B cell (primary cell): ENCODE measurements at regions of chr17 and their contacts with region 1.

Region 1: GRCh38 chr17:30278032-30278431 is 13.7 kb downstream of the BLMH start:
- DNase-seq: peak; percentile 25
- ATAC-seq: no peak
- H3K4me3 ChIP-seq: no peak overlapping the region
- H3K4me3 Mint-ChIP-seq: no peak overlapping the region
- H3K27ac ChIP-seq: no peak overlapping the region
- H3K27ac Mint-ChIP-seq: no peak overlapping the region
- H3K4me1 ChIP-seq: no peaks in the 10 kb centered on the region
- H3K4me1 Mint-ChIP-seq: no peaks in the 10 kb centered on the region
- H3K27me3 ChIP-seq: no peaks in the 10 kb centered on the region
- H3K27me3 Mint-ChIP-seq: no peaks in the 10 kb centered on the region
- CTCF ChIP-seq: peak; percentile 35

Region 2: GRCh38 chr17:29633886-29634285 is 644.1 kb before region 1 on chr17:
- CTCF ChIA-PET with region 1: no interaction called
- POLR2A ChIA-PET with region 1: no interaction called
- intact Hi-C with region 1: no loop called
- DNase-seq: no peak
- ATAC-seq: no peak
- H3K4me3 ChIP-seq: no peak overlapping the region
- H3K4me3 Mint-ChIP-seq: no peak overlapping the region
- H3K27ac ChIP-seq: no peak overlapping the region
- H3K27ac Mint-ChIP-seq: no peak overlapping the region
- H3K4me1 ChIP-seq: peaks cover under 1 to 6% of the 10 kb centered on the region in 2 donors
- H3K4me1 Mint-ChIP-seq: peaks cover 9% of the 10 kb centered on the region
- H3K27me3 ChIP-seq: no peaks in the 10 kb centered on the region
- H3K27me3 Mint-ChIP-seq: no peaks in the 10 kb centered on the region
- CTCF ChIP-seq: no peak

Region 3: GRCh38 chr17:30291543-30292285 is 13.7 kb after region 1 on chr17 and contains the start of gene BLMH:
- CTCF ChIA-PET with region 1: no interaction called
- POLR2A ChIA-PET with region 1: no interaction called
- intact Hi-C with region 1: no loop called
- DNase-seq: peak; percentile 83
- ATAC-seq: peak; percentile 94
- H3K4me3 ChIP-seq: peak within 1 kb of the TSS; percentile 70 to 87 (median 80)
- H3K4me3 Mint-ChIP-seq: peak within 1 kb of the TSS; percentile 96
- H3K27ac ChIP-seq: peak within 1 kb of the TSS in 1 of 2 donors; percentile 47
- H3K27ac Mint-ChIP-seq: peak within 1 kb of the TSS; percentile 78
- H3K4me1 ChIP-seq: peaks cover 12 to 16% of the 10 kb centered on the region in 2 donors
- H3K4me1 Mint-ChIP-seq: peaks cover 10% of the 10 kb centered on the region
- H3K27me3 ChIP-seq: peaks cover 0 to 4% (median 0%) of the 10 kb centered on the region in 4 experiments
- H3K27me3 Mint-ChIP-seq: no peaks in the 10 kb centered on the region
- CTCF ChIP-seq: no peak
- total RNA-seq, gene BLMH: 25.9 and 27.9 TPM in 2 replicates

Region 4: GRCh38 chr17:30336369-30337171 is 58.5 kb after region 1 on chr17:
- CTCF ChIA-PET with region 1: interaction called, 11 read pairs
- POLR2A ChIA-PET with region 1: no interaction called
- intact Hi-C with region 1: no loop called
- DNase-seq: peak; percentile 71
- ATAC-seq: peak; percentile 42
- H3K4me3 ChIP-seq: no peak overlapping the region
- H3K4me3 Mint-ChIP-seq: no peak overlapping the region
- H3K27ac ChIP-seq: no peak overlapping the region
- H3K27ac Mint-ChIP-seq: no peak overlapping the region
- H3K4me1 ChIP-seq: peaks cover 5 to 6% of the 10 kb centered on the region in 2 donors
- H3K4me1 Mint-ChIP-seq: peaks cover 11% of the 10 kb centered on the region
- H3K27me3 ChIP-seq: no peaks in the 10 kb centered on the region
- H3K27me3 Mint-ChIP-seq: peaks cover 7% of the 10 kb centered on the region
- CTCF ChIP-seq: peak; percentile 89